ENCODE measurements at regions of chr17 and their contacts with region 1.

Region 1: GRCh38 chr17:53807286-53807685 is 15.4 kb upstream of the KIF2B start:
- DNase-seq: no peak
- H3K4me3 ChIP-seq: no peak overlapping the region
- H3K27ac ChIP-seq: no peak overlapping the region
- H3K4me1 ChIP-seq: no peaks in the 10 kb centered on the region; a peak in 1 of 4 replicates
- H3K27me3 ChIP-seq: no peaks in the 10 kb centered on the region
- CTCF ChIP-seq: no peak
- EP300 ChIP-seq: no peak
- RAD21 ChIP-seq: no peak

Region 2: GRCh38 chr17:53792997-53793396 is 14.3 kb before region 1 on chr17:
- CTCF ChIA-PET with region 1: no interaction called
- POLR2A ChIA-PET with region 1: no interaction called
- DNase-seq: no peak
- H3K4me3 ChIP-seq: no peak overlapping the region
- H3K27ac ChIP-seq: no peak overlapping the region
- H3K4me1 ChIP-seq: no peaks in the 10 kb centered on the region
- H3K27me3 ChIP-seq: no peaks in the 10 kb centered on the region
- CTCF ChIP-seq: no peak
- EP300 ChIP-seq: no peak
- RAD21 ChIP-seq: no peak

Region 3: DNA sequence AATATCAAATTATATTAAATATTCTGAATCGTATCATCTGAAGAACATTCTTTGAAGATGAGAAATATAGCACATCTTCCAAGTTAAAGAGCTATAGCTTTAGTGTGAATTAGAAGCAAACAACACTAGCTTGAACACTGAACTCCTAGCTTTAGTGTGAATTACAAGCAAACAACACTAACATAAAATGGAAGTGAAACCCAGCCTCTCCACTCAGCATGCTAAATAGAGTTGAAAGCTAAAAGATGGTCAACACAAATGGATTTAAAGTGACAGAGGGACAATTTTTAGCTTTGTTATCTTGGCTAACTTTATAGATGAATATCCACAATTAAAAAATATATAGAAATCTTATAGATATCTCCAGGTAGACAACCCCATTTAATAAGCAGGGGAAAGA is 11.0 kb after region 1 on chr17:
- CTCF ChIA-PET with region 1: interaction called, 3 read pairs
- POLR2A ChIA-PET with region 1: interaction called, 10 read pairs
- DNase-seq: no peak
- H3K4me3 ChIP-seq: no peak overlapping the region
- H3K27ac ChIP-seq: no peak overlapping the region
- H3K4me1 ChIP-seq: no peaks in the 10 kb centered on the region
- H3K27me3 ChIP-seq: no peaks in the 10 kb centered on the region
- CTCF ChIP-seq: no peak
- EP300 ChIP-seq: no peak
- RAD21 ChIP-seq: no peak

Measured in SK-N-SH (cell line).